Heart right ventricle (tissue), 16 donors: ENCODE measurements at regions of chr17 and their contacts with region 1.

Region 1: DNA sequence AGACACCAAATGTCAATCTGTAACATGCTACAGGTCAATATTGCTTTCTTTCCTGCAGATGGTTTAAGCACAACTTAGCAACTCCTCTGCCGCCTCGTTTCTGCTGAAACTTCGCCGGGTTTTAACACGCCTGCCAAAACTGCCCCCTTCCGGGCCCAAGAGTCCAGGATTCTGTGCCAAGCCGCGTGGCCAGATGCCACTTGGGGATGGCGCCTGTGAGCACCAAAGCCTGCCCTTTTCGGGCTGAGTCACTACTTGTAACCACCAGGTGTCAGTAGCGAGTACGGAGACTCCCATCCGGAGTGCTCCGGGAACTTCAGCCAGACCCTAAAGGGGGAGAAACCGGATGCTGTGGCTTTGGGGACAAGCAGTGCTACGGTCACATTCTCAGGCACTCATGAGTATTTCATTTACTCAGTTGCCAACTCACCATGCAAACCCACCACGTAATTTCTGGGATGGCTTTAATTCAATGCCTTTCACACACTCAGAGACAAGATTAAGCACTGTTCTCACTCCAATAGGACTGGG is 7.8 kb downstream of the PMP22 start:
- DNase-seq: peak; percentile 84 to 87
- ATAC-seq: peak; percentile 12 to 60 (median 46)
- H3K4me3 ChIP-seq: peak overlapping the region in 9 of 10 donors; percentile 3 to 44 (median 31)
- H3K27ac ChIP-seq: peak overlapping the region in 8 of 10 donors; percentile 52 to 99 (median 59)
- H3K4me1 ChIP-seq: peaks cover 15 to 87% (median 78%) of the 10 kb centered on the region in 9 donors
- H3K27me3 ChIP-seq: peaks cover 0 to 15% (median 0%) of the 10 kb centered on the region in 7 donors
- CTCF ChIP-seq: peak; percentile 70 to 97 (median 93)

Region 2: DNA sequence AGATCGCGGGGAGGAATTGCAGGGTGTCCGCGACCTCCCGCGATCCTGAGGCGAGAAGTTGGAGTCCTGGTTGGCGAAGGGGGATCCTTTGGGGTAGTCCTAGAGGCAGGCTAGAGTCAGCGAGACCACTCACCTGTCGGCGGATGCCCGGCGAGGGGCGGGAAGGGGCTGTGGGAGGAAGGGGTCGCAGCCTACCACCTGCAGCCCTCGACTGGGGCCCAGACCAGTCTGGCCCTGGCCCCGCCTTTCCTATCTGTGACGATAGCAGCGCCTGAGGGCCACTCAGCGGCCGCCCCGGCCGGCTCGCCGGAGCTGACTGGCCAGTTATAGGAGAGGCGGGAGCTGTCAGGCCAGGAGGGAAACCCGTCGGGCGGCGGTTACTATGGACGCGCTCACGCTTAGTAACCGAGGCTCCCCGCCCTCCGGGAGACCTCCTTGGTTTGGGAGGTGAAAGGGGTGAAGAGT is 84.1 kb after region 1 on chr17 and contains the start of gene TEKT3:
- intact Hi-C with region 1: loop called in 2 of 10 experiments (anchors 5 kb)
- DNase-seq: peak; percentile 84 to 88
- ATAC-seq: peak; percentile 100
- H3K4me3 ChIP-seq: peak within 1 kb of the TSS; percentile 29 to 68 (median 58)
- H3K27ac ChIP-seq: no peak within 1 kb of the TSS
- H3K4me1 ChIP-seq: peaks cover 0 to 13% (median 10%) of the 10 kb centered on the region in 9 donors
- H3K27me3 ChIP-seq: peaks cover 0 to 58% (median 11%) of the 10 kb centered on the region in 7 donors
- CTCF ChIP-seq: no peak
- total RNA-seq, gene TEKT3: 0.26 to 1.1 (median 0.68) TPM in 7 of 10 donors, not detected in the others

Region 3: GRCh38 chr17:15409721-15410250 is 152.5 kb after region 1 on chr17:
- intact Hi-C with region 1: loop called in 3 of 10 experiments (anchors 5 to 10 kb)
- DNase-seq: peak in 1 of 2 donors; percentile 37
- ATAC-seq: peak; percentile 59 to 76 (median 70)
- H3K4me3 ChIP-seq: peak overlapping the region in 4 of 10 donors; percentile 13 to 16 (median 14)
- H3K27ac ChIP-seq: peak overlapping the region; percentile 48 to 81 (median 74)
- H3K4me1 ChIP-seq: peaks cover 3 to 47% (median 20%) of the 10 kb centered on the region in 9 donors
- H3K27me3 ChIP-seq: no peaks in the 10 kb centered on the region
- CTCF ChIP-seq: no peak

Region 4: GRCh38 chr17:15436473-15437302 is 179.4 kb after region 1 on chr17:
- intact Hi-C with region 1: loop called in 3 of 10 experiments (anchors 2 to 5 kb)
- DNase-seq: peak; percentile 64 to 75
- ATAC-seq: peak; percentile 37 to 75 (median 64)
- H3K4me3 ChIP-seq: no peak overlapping the region
- H3K27ac ChIP-seq: peak overlapping the region; percentile 51 to 88 (median 76)
- H3K4me1 ChIP-seq: peaks cover 13 to 51% (median 41%) of the 10 kb centered on the region in 9 donors
- H3K27me3 ChIP-seq: no peaks in the 10 kb centered on the region
- CTCF ChIP-seq: peak in 8 of 9 donors; percentile 9 to 58 (median 44)

Region 5: GRCh38 chr17:15502369-15503112 is 245.2 kb after region 1 on chr17:
- intact Hi-C with region 1: loop called (anchors 1 to 5 kb)
- DNase-seq: peak; percentile 92 to 93
- ATAC-seq: peak; percentile 88 to 96 (median 94)
- H3K4me3 ChIP-seq: peak overlapping the region in 9 of 10 donors; percentile 8 to 47 (median 40)
- H3K27ac ChIP-seq: peak overlapping the region; percentile 36 to 88 (median 80)
- H3K4me1 ChIP-seq: peaks cover 3 to 23% (median 14%) of the 10 kb centered on the region in 9 donors
- H3K27me3 ChIP-seq: no peaks in the 10 kb centered on the region
- CTCF ChIP-seq: peak; percentile 84 to 97 (median 91)